Head of caudate nucleus (tissue), 42 donors: ENCODE measurements at regions of chr5 and their contacts with region 1.

Region 1: GRCh38 chr5:152505442-152506042 is 100.5 kb upstream of the NMUR2 start:
- DNase-seq: peak in 41 of 42 donors; percentile 16 to 93 (median 74)

Region 2: DNA sequence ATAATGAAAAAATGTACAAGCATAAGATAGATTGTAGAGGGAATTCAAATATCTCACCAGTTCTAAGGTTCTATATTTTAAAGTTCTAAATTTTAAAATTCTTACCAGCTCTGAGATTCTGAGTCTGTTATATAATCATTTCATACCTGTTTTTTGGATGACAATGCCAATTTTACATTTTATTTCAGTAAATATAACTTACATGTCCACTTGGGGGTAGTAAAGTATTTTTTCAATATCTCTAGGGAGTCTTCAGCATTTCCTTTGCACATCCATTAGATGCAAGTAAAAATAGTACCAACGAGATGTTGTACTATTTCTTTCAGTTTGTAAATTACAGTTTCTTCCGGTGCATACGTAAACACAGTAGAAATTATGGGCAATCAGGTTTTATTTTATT is 126.2 kb before region 1 on chr5:
- intact Hi-C with region 1: loop called (anchors 10 kb)
- DNase-seq: no peak